ENCODE measurements at regions of chr7 and their contacts with region 1.

Region 1: GRCh38 chr7:100469227-100470044 is 5.4 kb upstream of the SPACDR start:
- DNase-seq: peak; percentile 86
- ATAC-seq: peak; percentile 85
- H3K4me3 Mint-ChIP-seq: no peak overlapping the region
- H3K27ac Mint-ChIP-seq: peak overlapping the region; percentile 39
- H3K4me1 Mint-ChIP-seq: peaks cover 21% of the 10 kb centered on the region
- H3K27me3 Mint-ChIP-seq: no peaks in the 10 kb centered on the region

Region 2: DNA sequence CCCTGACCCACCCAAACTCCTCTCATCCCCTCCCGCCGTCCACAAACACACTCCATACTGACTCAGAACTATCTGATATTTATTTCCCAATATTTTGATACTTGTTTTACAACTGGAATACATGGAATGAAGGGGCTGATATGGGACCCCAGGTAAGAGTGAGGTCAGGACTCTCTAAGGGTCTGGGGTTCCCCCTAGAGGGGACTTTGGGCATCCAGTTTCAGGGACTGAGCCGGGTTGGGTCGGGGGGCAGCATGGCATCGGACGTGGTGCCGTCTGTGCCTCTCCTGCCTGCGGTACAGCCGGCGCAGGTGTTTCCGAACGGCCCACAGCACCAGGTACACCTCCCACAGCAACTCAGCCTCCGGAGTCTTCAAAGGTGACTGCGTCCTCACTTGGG is 12.9 kb before region 1 on chr7:
- CTCF ChIA-PET with region 1: interaction called, 18 read pairs
- POLR2A ChIA-PET with region 1: interaction called, 3 read pairs
- DNase-seq: no peak
- ATAC-seq: no peak
- H3K4me3 Mint-ChIP-seq: no peak overlapping the region
- H3K27ac Mint-ChIP-seq: no peak overlapping the region
- H3K4me1 Mint-ChIP-seq: peaks cover 14% of the 10 kb centered on the region
- H3K27me3 Mint-ChIP-seq: no peaks in the 10 kb centered on the region